ENCODE measurements at regions of chr1 and their contacts with region 1.

Region 1: GRCh38 chr1:39258146-39258924 is 53.8 kb downstream of the MACF1 start:
- DNase-seq: peak; percentile 80
- H3K4me3 Mint-ChIP-seq: no peak overlapping the region
- H3K27ac Mint-ChIP-seq: peak overlapping the region; percentile 50
- H3K4me1 Mint-ChIP-seq: peaks cover 33% of the 10 kb centered on the region
- H3K27me3 Mint-ChIP-seq: no peaks in the 10 kb centered on the region

Region 2: DNA sequence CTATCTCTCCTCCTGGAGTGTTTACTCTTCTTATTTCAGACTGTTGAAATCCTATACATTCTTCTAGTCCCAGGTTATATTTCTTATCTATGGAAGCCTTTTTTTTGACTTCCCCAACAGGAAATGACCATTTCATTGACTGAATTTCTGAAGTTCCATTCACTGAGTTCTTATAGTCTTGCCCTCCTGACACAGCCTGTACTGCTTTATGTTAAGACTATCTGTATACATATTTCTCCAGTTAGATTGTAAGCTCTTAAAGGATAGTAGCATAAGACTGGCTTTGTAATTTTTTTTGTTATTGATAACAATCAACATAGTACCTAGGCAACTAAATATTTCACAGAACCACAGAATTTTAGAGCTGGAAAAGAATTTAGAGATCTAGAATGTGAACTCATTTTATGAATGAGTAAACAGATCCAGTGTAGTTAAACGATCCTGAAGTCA is 68.7 kb before region 1 on chr1:
- CTCF ChIA-PET with region 1: interaction called, 257 read pairs
- intact Hi-C with region 1: loop called (anchors 1 kb)
- DNase-seq: no peak
- H3K4me3 Mint-ChIP-seq: no peak overlapping the region
- H3K27ac Mint-ChIP-seq: no peak overlapping the region
- H3K4me1 Mint-ChIP-seq: peaks cover 86% of the 10 kb centered on the region
- H3K27me3 Mint-ChIP-seq: no peaks in the 10 kb centered on the region

Region 3: DNA sequence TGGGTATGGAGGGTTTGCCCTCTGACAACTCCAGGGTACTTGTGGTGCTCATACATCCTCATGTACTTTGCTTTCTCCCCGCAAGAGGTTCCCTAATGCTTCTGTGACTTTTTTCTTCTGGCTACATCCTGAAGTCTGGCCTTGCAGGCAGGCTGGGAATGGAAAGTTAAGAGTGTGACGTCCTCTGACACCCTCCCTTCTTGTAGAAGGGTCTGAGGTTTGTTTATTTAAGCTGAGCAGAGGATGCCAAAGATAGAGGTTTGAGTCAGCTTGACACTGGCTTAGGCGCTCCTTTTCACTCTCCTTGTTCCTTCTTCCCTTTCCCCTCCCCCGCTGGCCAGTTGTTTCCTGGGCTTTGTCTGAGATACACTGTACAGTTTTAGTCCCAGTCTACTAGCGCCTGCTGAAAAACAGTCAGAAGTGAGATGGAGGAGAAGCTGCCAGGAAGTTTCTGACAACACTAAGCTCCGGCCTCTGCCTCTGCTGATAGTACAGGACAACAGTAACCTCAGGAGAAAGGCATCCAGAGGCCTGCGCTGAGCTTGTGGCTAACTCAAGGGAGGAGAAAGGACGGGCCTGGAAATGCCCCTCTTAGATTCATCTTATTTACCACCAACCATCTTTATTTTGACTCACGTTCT is 53.8 kb before region 1 on chr1 and contains the start of gene MACF1:
- CTCF ChIA-PET with region 1: interaction called, 26 read pairs
- intact Hi-C with region 1: loop called (anchors 1 kb)
- DNase-seq: peak; percentile 76
- H3K4me3 Mint-ChIP-seq: peak within 1 kb of the TSS; percentile 81
- H3K27ac Mint-ChIP-seq: peak within 1 kb of the TSS; percentile 98
- H3K4me1 Mint-ChIP-seq: peaks cover 55% of the 10 kb centered on the region
- H3K27me3 Mint-ChIP-seq: no peaks in the 10 kb centered on the region
- total RNA-seq, gene MACF1: 174 to 179 TPM

Region 4: DNA sequence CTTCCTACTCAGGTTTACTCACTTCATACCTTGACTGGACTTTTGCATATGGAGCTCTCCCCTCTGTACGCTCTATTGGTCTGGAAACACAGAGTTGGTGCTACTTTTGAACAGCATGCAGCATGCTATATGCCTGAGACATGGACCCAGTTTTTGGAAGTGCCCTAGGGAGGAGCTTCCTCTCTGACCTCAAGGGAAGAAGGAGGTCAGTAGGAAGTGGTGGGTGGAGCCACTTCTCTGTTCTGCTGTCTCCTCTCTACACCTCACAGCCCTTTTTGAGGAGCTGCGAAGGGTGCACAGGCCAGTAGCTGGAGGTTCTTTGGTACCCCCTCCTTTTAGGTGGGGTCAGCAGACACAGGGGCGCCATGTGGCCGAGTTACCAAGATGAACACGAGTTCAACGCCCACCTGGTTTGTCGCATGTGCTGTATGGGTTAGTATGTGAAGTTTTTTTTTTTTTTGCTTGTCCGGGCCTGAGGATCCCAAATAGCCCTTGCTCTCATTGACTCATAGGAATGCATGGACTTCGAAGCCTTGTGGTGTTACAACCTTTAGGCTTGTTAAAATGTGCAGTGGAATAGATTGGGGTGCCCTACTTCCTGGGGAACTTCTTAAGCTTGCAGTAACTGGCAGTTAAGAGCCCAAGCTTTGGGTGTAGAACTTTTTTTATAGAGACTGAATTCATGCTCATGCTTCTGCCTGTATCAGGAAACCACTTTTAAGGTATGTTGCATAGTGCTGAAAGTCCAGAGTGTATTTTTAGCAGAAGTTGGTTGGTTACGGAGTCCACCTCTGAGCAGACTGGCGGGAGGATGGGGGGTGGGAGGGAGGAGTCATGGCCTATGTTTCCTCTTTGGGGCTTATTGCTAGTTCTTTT is 43.1 kb before region 1 on chr1:
- CTCF ChIA-PET with region 1: interaction called, 31 read pairs
- intact Hi-C with region 1: no loop called
- DNase-seq: peak; percentile 64
- H3K4me3 Mint-ChIP-seq: peak overlapping the region; percentile 89
- H3K27ac Mint-ChIP-seq: peak overlapping the region; percentile 93
- H3K4me1 Mint-ChIP-seq: peaks cover 58% of the 10 kb centered on the region
- H3K27me3 Mint-ChIP-seq: no peaks in the 10 kb centered on the region

Region 5: DNA sequence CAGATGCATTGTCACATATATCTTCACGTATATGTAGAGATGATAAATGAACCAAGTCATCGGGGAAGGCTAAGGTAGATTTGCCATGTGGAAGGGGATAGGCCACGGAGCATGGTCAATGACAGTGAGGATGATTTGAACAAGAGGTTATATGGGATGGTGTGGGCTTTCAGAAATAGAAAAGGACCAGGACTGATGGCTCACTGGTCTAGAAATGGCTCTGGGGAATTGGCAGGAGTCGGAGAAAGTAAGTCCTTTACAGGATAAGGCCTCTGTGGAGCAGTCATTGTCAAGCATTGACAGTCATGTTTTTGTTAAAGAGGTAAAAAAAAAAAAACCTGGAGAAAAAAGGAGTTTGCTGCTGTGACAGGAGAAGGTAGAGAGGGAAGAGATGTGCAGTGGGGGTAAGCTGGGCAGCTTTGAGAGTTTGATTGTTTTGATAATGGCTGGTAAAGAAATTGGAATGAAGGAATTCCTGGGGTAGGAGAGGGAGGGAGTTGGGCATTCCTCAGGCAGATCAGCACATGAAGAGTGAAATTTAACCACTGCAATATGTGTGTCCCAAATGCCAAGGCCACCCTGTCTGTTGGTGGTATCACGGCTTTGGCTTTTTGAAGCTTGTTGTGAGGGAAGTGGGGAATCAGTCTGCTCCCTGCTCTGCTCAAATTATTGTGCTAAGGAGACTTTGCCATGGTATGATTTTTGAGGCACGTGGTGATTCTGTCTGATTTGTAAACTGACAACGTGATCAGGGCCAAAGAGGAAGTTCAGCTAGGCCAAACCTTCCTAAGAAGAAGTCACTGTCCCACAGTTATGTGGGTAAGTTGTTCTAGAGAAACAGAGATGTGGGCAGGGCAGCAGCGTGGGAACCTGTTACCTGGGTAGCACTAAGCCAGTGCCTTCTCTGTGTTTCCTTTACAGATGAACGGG is 27.8 kb before region 1 on chr1:
- CTCF ChIA-PET with region 1: interaction called, 12 read pairs
- intact Hi-C with region 1: no loop called
- DNase-seq: peak; percentile 29
- H3K4me3 Mint-ChIP-seq: peak overlapping the region; percentile 63
- H3K27ac Mint-ChIP-seq: peak overlapping the region; percentile 16
- H3K4me1 Mint-ChIP-seq: peaks cover 59% of the 10 kb centered on the region
- H3K27me3 Mint-ChIP-seq: no peaks in the 10 kb centered on the region

Region 6: GRCh38 chr1:39332291-39332690 is 74.0 kb after region 1 on chr1:
- CTCF ChIA-PET with region 1: no interaction called
- intact Hi-C with region 1: no loop called
- DNase-seq: no peak
- H3K4me3 Mint-ChIP-seq: no peak overlapping the region
- H3K27ac Mint-ChIP-seq: no peak overlapping the region
- H3K4me1 Mint-ChIP-seq: peaks cover 9% of the 10 kb centered on the region
- H3K27me3 Mint-ChIP-seq: no peaks in the 10 kb centered on the region

Region 7: DNA sequence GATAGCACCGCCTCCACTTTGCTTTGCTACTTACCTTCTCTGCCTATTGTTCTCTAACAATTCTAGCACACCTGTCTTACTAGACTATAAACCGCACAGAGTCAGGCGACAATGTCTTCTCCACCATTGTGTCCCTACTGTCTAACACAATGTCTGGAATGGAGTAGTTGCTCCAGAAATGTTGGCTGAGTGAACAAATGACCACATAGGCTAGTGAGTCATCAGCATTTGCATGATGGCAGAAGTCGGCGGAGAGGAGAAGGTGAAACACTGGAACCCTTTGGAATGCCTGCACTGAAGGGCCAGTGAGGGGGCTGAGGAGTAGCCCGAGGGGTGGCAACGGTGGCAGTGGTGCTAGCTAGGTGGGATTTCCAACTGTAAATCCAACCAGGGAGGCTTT is 332.2 kb after region 1 on chr1:
- CTCF ChIA-PET with region 1: no interaction called
- intact Hi-C with region 1: no loop called
- DNase-seq: no peak
- H3K4me3 Mint-ChIP-seq: no peak overlapping the region
- H3K27ac Mint-ChIP-seq: no peak overlapping the region
- H3K4me1 Mint-ChIP-seq: no peaks in the 10 kb centered on the region
- H3K27me3 Mint-ChIP-seq: no peaks in the 10 kb centered on the region

Region 8: DNA sequence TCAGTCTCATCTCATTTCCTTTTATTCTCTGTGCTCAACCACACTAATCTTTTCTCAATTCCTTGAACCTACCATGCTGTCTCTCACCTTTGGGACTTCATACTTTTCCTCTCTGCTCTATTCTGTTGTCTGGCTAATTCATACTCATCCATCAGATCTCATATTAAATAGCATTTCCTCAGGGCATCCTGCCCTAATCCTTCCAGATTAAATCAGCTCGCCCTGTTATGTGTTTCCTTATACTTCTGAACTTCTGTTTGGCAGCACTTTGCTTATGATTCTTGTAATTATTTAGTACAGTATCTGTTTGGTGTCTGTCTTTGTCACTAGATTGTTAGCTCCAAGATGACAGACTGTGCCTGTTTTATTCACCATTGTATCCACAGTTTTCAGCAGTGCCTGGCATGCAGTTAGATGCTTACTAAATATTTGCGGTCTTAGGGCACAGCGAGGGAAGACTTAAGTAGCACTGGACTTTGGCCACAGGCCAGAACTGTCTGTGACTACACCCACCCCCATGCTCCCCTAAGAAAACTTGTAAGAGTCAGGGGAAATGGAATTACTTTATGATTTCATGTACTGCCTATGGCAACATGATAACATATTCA is 772.3 kb after region 1 on chr1:
- CTCF ChIA-PET with region 1: no interaction called
- intact Hi-C with region 1: no loop called
- DNase-seq: no peak
- H3K4me3 Mint-ChIP-seq: no peak overlapping the region
- H3K27ac Mint-ChIP-seq: no peak overlapping the region
- H3K4me1 Mint-ChIP-seq: peaks cover 25% of the 10 kb centered on the region
- H3K27me3 Mint-ChIP-seq: no peaks in the 10 kb centered on the region

Measured in activated naive CD4-positive, alpha-beta T cell treated with anti-CD3 and anti-CD28 coated beads for 36 hours (primary cell).